SK-N-SH (cell line): ENCODE measurements at regions of chr14 and their contacts with region 1.

Region 1: GRCh38 chr14:96584199-96584906 is 82.2 kb downstream of the PAPOLA start:
- DNase-seq: peak; percentile 88
- H3K4me3 ChIP-seq: peak overlapping the region in 1 of 2 experiments; percentile 40; a peak in 1 of 4 replicates
- H3K27ac ChIP-seq: no peak overlapping the region
- H3K4me1 ChIP-seq: peaks cover 0 to 2% of the 10 kb centered on the region in 2 experiments; a peak in 1 of 4 replicates
- H3K27me3 ChIP-seq: no peaks in the 10 kb centered on the region; the same call in 1 of the 2 replicates
- CTCF ChIP-seq: peak; percentile 44
- EP300 ChIP-seq: no peak
- RAD21 ChIP-seq: peak; percentile 97

Region 2: DNA sequence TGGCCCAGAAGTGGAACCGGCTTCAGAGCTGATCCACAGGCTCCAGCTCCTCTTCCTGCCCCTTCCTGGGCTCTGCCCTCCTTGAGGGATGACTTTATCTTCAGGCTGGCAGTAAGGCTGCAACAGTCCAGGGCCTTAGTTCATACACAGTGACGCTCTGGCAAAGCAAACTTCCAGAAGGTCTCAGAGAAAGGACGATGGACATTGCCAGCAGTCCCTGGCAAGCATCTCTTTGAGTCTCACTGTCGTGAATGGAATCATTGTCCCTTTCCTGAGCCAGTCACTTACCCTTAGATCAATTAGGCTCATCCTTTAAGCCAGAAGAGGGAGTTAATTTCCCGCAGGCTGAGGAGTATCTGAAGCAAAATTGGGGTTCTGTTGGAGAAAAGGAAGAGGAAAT is 183.9 kb before region 1 on chr14:
- CTCF ChIA-PET with region 1: no interaction called
- POLR2A ChIA-PET with region 1: no interaction called
- DNase-seq: no peak
- H3K4me3 ChIP-seq: no peak overlapping the region
- H3K27ac ChIP-seq: no peak overlapping the region
- H3K4me1 ChIP-seq: no peaks in the 10 kb centered on the region
- H3K27me3 ChIP-seq: no peaks in the 10 kb centered on the region
- CTCF ChIP-seq: no peak
- EP300 ChIP-seq: no peak
- RAD21 ChIP-seq: no peak

Region 3: DNA sequence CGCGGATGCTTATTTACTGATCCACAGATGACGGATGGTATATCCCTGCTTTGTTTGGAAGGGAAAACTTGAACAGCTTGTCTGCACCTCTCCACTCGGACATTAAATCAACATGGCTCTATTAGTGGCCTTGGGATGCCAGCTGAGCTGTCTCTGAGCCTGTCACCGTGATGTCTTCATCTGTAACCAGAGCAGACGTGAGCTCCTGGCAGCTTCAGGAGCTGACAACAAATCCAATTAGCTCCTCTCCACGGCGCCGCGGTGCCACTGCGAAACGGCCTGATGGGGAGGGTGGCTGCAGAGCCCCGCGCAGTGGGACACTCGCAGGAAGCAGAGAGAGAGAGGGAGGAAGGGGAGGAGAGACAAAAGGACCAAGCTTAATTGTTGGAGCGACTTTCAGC is 30.1 kb after region 1 on chr14:
- CTCF ChIA-PET with region 1: interaction called, 12 read pairs
- POLR2A ChIA-PET with region 1: no interaction called
- DNase-seq: peak; percentile 65
- H3K4me3 ChIP-seq: 0 out of 4 replicates have a peak overlapping the region, but pooled peaks of 1 of the 2 experiments have one; percentile 8
- H3K27ac ChIP-seq: no peak overlapping the region
- H3K4me1 ChIP-seq: peaks cover 0 to 17% of the 10 kb centered on the region in 2 experiments; a peak in 2 of 4 replicates
- H3K27me3 ChIP-seq: no peaks in the 10 kb centered on the region
- CTCF ChIP-seq: no peak
- EP300 ChIP-seq: no peak
- RAD21 ChIP-seq: no peak

Region 4: GRCh38 chr14:96741151-96741977 is 157.0 kb after region 1 on chr14:
- CTCF ChIA-PET with region 1: interaction called, 170 read pairs
- POLR2A ChIA-PET with region 1: interaction called, 3 read pairs
- DNase-seq: peak; percentile 91
- H3K4me3 ChIP-seq: peak overlapping the region; percentile 57 to 72
- H3K27ac ChIP-seq: no peak overlapping the region
- H3K4me1 ChIP-seq: peaks cover 0 to 3% of the 10 kb centered on the region in 2 experiments; a peak in 1 of 4 replicates
- H3K27me3 ChIP-seq: peaks cover 17% of the 10 kb centered on the region; the same call in 1 of the 2 replicates
- CTCF ChIP-seq: peak; percentile 77
- EP300 ChIP-seq: no peak
- RAD21 ChIP-seq: peak; percentile 79

Region 5: GRCh38 chr14:96748362-96748761 is 164.0 kb after region 1 on chr14:
- CTCF ChIA-PET with region 1: interaction called, 61 read pairs
- POLR2A ChIA-PET with region 1: no interaction called
- DNase-seq: no peak
- H3K4me3 ChIP-seq: no peak overlapping the region
- H3K27ac ChIP-seq: no peak overlapping the region
- H3K4me1 ChIP-seq: no peaks in the 10 kb centered on the region
- H3K27me3 ChIP-seq: no peaks in the 10 kb centered on the region; the same call in 1 of the 2 replicates
- CTCF ChIP-seq: no peak
- EP300 ChIP-seq: no peak
- RAD21 ChIP-seq: no peak